CD8-positive, alpha-beta memory T cell (primary cell): ENCODE measurements at regions of chr12 and their contacts with region 1.

Region 1: GRCh38 chr12:12349711-12350665 is at the start of gene MANSC1:
- DNase-seq: peak; percentile 25 to 67 (median 45)
- H3K4me3 ChIP-seq: peak within 1 kb of the TSS; percentile 72
- H3K4me3 Mint-ChIP-seq: peak within 1 kb of the TSS; percentile 66 to 83 (median 74)
- H3K27ac ChIP-seq: no peak within 1 kb of the TSS
- H3K27ac Mint-ChIP-seq: peak within 1 kb of the TSS; percentile 23 to 75 (median 50)
- H3K4me1 ChIP-seq: peaks cover 20% of the 10 kb centered on the region
- H3K4me1 Mint-ChIP-seq: peaks cover 14 to 29% (median 21%) of the 10 kb centered on the region in 3 donors
- H3K27me3 ChIP-seq: no peaks in the 10 kb centered on the region
- H3K27me3 Mint-ChIP-seq: no peaks in the 10 kb centered on the region
- total RNA-seq, gene MANSC1: 0.31 to 0.42 TPM

Region 2: GRCh38 chr12:12334367-12335040 is 15.5 kb before region 1 on chr12:
- CTCF ChIA-PET with region 1: interaction called, 12 read pairs
- POLR2A ChIA-PET with region 1: no interaction called
- DNase-seq: peak; percentile 50 to 69 (median 59)
- H3K4me3 ChIP-seq: no peak overlapping the region
- H3K4me3 Mint-ChIP-seq: peak overlapping the region in 2 of 7 donors; percentile 7 to 15
- H3K27ac ChIP-seq: no peak overlapping the region
- H3K27ac Mint-ChIP-seq: peak overlapping the region in 1 of 8 donors; percentile 29
- H3K4me1 ChIP-seq: peaks cover 6% of the 10 kb centered on the region
- H3K4me1 Mint-ChIP-seq: peaks cover 8 to 15% (median 14%) of the 10 kb centered on the region in 3 donors
- H3K27me3 ChIP-seq: no peaks in the 10 kb centered on the region
- H3K27me3 Mint-ChIP-seq: peaks cover 1 to 7% of the 10 kb centered on the region in 2 donors

Region 3: DNA sequence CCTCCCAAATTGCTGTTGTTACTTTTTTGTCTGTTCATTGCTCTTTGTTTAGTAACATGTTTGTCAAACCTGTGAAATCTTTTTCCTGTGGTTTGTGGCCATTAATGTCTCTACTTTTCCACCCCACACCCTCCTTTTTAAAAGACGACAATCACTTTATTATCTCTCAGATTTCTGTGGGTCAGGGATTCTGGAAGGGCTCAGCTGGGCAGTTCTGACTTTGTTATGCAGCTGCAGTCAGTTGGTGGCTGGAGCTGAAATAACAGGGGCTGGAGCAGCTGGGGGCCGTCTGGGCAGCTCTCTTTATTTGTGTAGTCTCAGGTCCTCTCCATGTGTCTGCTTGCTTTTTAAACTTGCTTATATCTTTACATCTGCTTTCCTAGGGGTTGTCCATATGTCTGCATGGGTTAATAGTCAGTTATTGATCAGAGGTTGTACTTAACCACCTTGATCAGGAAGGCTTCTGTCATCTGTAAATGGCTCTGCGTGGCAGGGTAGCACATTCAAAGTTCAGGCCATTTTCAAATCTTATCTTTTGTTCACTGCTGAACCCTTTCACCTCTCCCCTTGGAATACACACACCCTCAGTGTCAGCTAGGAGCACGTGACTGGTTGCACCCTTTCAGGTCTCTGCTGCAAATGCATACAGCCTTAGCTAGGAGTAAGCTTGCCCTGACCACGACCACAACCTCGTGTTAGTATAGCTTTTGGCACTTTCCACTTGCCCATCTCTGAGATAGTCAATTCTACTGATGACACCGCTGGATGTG is 34.8 kb after region 1 on chr12:
- CTCF ChIA-PET with region 1: no interaction called
- POLR2A ChIA-PET with region 1: no interaction called
- DNase-seq: peak; percentile 6 to 77 (median 33)
- H3K4me3 ChIP-seq: peak overlapping the region; percentile 17
- H3K4me3 Mint-ChIP-seq: peak overlapping the region; percentile 58 to 84 (median 71)
- H3K27ac ChIP-seq: peak overlapping the region; percentile 43
- H3K27ac Mint-ChIP-seq: peak overlapping the region; percentile 75 to 99 (median 98)
- H3K4me1 ChIP-seq: peaks cover 59% of the 10 kb centered on the region
- H3K4me1 Mint-ChIP-seq: peaks cover 72 to 91% (median 91%) of the 10 kb centered on the region in 3 donors
- H3K27me3 ChIP-seq: no peaks in the 10 kb centered on the region
- H3K27me3 Mint-ChIP-seq: no peaks in the 10 kb centered on the region

Region 4: DNA sequence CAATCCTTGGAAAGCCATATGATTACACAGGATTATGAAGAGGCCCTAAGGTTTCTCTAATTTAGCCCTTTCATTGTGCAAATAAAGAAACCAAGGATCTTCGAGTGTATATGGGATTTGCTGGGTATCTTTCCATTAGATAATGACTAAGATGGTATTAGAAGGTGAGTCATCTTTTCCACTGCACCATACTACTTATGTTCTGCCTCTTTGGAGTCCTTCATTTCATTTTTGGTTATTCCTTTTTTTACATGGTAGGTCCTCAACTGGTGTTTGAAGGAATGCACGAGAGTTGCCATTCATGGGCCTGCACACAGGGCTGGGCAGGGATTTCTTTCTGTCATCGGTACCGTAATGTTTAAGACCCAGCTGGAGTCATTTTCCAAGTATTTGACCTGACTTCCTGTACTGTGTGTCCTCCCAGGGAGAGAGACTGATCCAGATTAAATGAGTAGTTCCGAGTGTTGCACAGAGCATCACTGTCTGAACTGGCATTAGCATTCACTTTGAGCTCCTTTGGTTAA is 92.6 kb after region 1 on chr12:
- CTCF ChIA-PET with region 1: no interaction called
- POLR2A ChIA-PET with region 1: no interaction called
- DNase-seq: no peak
- H3K4me3 ChIP-seq: no peak overlapping the region
- H3K4me3 Mint-ChIP-seq: peak overlapping the region in 4 of 7 donors; percentile 66 to 74 (median 72)
- H3K27ac ChIP-seq: peak overlapping the region; percentile 83
- H3K27ac Mint-ChIP-seq: peak overlapping the region; percentile 95 to 100 (median 98)
- H3K4me1 ChIP-seq: peaks cover 54% of the 10 kb centered on the region
- H3K4me1 Mint-ChIP-seq: peaks cover 84 to 94% (median 91%) of the 10 kb centered on the region in 3 donors
- H3K27me3 ChIP-seq: no peaks in the 10 kb centered on the region
- H3K27me3 Mint-ChIP-seq: no peaks in the 10 kb centered on the region

Region 5: DNA sequence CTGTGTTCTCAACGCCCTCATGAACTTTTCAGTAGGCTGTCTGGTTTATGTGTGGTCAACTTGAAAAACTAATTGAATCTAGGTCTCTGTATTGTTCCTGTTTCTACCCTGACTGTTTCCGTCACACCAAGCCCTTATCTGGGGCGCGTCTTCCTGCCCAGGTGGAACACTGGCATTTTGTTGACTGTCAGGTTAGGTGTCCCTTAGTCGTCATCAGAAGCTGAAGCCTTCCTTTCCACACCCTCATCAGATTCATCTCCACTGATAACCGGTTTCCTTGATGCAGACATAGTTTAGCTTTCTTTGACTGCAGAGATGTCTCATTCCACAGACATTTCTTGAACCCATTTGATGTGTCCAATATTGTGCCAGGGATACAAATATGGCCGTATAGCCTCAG is 116.2 kb after region 1 on chr12:
- CTCF ChIA-PET with region 1: no interaction called
- POLR2A ChIA-PET with region 1: no interaction called
- DNase-seq: peak; percentile 23 to 87 (median 80)
- H3K4me3 ChIP-seq: peak overlapping the region; percentile 5
- H3K4me3 Mint-ChIP-seq: peak overlapping the region; percentile 50 to 72 (median 59)
- H3K27ac ChIP-seq: peak overlapping the region; percentile 68
- H3K27ac Mint-ChIP-seq: peak overlapping the region; percentile 93 to 100 (median 99)
- H3K4me1 ChIP-seq: peaks cover 48% of the 10 kb centered on the region
- H3K4me1 Mint-ChIP-seq: peaks cover 71 to 85% (median 81%) of the 10 kb centered on the region in 3 donors
- H3K27me3 ChIP-seq: no peaks in the 10 kb centered on the region
- H3K27me3 Mint-ChIP-seq: no peaks in the 10 kb centered on the region